IMR-90 (cell line): ENCODE measurements at regions of chr18 and their contacts with region 1.

Region 1: DNA sequence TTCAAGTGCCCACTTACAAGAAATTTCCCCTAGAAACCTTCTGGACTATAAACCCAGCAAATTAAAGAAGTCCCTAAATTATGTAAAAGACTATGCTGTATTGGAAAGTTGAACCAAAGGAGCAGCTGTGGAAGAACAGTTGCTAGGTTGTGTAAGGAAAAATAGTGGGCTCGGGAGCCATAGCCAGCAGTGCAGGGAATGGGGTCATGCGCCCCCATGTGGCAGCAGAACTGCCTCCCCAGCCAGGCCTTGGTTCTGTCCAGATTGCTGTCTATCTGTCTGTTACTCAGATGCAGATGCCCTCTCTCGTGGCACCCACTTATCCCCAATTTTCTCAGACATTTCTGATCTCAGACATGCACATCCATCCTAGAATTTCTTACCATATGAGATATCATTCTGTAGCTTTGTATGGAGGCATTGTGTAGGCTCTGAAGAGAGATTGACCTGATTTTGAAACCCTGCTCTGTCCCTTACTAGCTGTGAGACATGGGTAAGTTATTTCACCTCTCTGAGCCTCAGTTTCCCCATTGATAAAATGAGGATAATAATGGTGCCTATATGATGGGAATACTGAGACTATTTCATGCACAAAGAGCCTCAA is 258.3 kb downstream of the SS18 start:
- DNase-seq: peak; percentile 61
- ATAC-seq: peak; percentile 87
- H3K4me3 ChIP-seq: no peak overlapping the region
- H3K27ac ChIP-seq: no peak overlapping the region
- H3K4me1 ChIP-seq: peaks cover 9% of the 10 kb centered on the region
- H3K27me3 ChIP-seq: peaks cover 5% of the 10 kb centered on the region; the same call in 1 of the 2 replicates
- CTCF ChIP-seq: peak; percentile 84
- POLR2A ChIP-seq: no peak
- RAD21 ChIP-seq: peak; percentile 88

Region 2: DNA sequence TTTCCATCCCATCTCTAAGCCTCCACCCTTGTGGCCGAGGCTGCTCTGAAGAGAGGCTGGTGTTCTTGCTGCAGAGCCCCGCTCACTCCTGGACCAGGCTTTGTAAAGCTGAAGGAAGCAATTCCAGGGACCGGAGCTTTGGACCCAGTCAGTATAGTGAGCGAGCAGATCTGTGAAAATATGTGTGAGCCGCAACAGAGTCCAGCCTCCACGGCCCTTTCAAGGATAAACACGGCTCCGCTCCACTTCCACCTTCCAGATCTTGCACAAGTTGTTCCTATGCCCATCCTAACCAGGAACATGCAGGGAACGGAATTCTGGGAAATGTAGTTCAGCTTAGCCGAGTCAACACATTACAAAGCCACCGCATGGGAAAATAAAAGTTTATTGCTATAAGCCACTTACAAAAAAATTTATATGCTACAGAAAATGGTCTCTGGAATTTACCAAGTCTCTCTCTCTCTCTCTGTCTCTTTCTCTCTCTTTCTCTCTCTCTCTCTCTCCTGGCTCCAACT is 328.5 kb before region 1 on chr18:
- CTCF ChIA-PET with region 1: no interaction called
- POLR2A ChIA-PET with region 1: no interaction called
- dilution Hi-C with region 1: no loop called
- in situ Hi-C with region 1: no loop called
- intact Hi-C with region 1: loop called (anchors 2 kb)
- DNase-seq: peak; percentile 87
- ATAC-seq: peak; percentile 99
- H3K4me3 ChIP-seq: peak overlapping the region; percentile 42
- H3K27ac ChIP-seq: peak overlapping the region; percentile 72
- H3K4me1 ChIP-seq: no peaks in the 10 kb centered on the region
- H3K27me3 ChIP-seq: peaks cover 3% of the 10 kb centered on the region; the same call in 1 of the 2 replicates
- CTCF ChIP-seq: no peak
- POLR2A ChIP-seq: no peak
- RAD21 ChIP-seq: peak; percentile 17; the same call in 1 of the 2 replicates

Region 3: DNA sequence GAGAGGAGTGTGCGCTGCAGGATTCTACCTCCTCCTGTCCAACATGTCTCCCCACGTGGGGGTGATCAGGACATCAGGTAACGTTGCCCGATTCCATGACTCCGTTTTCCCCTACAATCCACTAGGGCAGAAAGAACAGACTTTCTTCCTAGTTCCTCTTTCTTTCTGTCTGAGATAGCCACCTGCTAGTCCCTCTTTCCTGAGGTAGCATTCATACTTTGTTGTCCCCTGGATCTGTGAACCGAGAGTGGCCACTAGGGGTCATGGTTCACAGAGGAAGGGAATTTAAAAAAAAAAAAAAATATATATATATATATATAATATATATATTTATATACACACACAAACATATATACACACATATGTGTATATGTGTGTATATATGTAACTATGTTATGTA is 270.2 kb before region 1 on chr18:
- CTCF ChIA-PET with region 1: no interaction called
- POLR2A ChIA-PET with region 1: no interaction called
- dilution Hi-C with region 1: no loop called
- in situ Hi-C with region 1: loop called (anchors 25 kb)
- intact Hi-C with region 1: loop called (anchors 1 kb)
- DNase-seq: peak; percentile 33
- ATAC-seq: no peak
- H3K4me3 ChIP-seq: no peak overlapping the region
- H3K27ac ChIP-seq: no peak overlapping the region
- H3K4me1 ChIP-seq: no peaks in the 10 kb centered on the region
- H3K27me3 ChIP-seq: peaks cover 2% of the 10 kb centered on the region; the same call in 1 of the 2 replicates
- CTCF ChIP-seq: peak; percentile 36
- POLR2A ChIP-seq: no peak
- RAD21 ChIP-seq: peak; percentile 45